Transverse colon (tissue), 4 donors: ENCODE measurements at regions of chr3 and their contacts with region 1.

Region 1: DNA sequence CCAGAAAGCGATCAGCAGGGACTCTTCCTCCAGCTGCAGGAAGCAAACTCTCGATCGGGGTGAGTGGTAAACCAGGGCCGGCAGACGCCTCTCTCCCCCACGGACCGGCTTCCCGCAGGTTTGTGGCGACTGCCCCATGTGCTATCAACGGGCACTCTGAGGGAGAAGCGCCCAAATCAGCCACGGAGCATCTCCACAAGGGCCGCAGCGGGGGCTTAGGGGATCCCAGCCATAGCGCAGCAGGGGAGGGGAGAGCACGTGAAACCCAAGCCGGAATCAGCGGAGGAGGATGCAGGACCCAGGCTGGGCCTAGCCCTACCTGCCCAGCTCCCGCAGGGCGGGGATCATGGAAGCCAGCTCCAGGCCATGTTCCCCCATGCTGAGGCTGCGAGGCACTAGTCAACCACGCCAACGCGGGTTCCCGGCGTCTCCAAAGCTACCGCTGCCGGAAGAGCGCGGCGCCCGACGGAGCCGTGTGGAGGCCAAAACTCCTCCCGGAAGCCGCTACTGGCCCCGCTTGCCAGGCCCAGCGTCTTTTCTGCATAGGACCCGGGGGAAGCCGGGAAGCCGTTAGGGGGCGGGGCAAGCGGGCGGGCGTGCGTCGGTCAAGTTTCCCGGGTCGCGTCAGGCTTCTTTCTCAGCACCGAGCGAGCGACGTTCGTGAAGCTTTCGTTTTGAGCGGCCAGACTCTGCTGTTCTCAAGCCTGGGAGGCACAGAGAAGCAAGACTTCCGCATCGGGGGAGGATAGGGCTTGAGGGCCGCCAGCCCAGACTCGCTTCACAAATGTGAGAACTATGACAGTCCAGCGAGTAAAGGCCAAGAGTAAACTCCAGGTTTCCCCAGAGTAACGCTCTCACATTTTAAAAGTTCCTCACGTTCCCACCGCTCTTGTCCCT is at the start of gene ATR:
- DNase-seq: peak; percentile 98
- H3K4me3 ChIP-seq: peak within 1 kb of the TSS; percentile 65 to 93 (median 89)
- H3K27ac ChIP-seq: peak within 1 kb of the TSS; percentile 85 to 98 (median 92)
- H3K4me1 ChIP-seq: peaks cover 14 to 43% (median 23%) of the 10 kb centered on the region in 4 donors
- H3K27me3 ChIP-seq: no peaks in the 10 kb centered on the region
- CTCF ChIP-seq: peak in 1 of 5 experiments; percentile 12
- EP300 ChIP-seq: peak; percentile 44
- POLR2A ChIP-seq: peak; percentile 88
- total RNA-seq, gene ATR: 22.4 to 37.8 (median 25.3) TPM

Region 2: DNA sequence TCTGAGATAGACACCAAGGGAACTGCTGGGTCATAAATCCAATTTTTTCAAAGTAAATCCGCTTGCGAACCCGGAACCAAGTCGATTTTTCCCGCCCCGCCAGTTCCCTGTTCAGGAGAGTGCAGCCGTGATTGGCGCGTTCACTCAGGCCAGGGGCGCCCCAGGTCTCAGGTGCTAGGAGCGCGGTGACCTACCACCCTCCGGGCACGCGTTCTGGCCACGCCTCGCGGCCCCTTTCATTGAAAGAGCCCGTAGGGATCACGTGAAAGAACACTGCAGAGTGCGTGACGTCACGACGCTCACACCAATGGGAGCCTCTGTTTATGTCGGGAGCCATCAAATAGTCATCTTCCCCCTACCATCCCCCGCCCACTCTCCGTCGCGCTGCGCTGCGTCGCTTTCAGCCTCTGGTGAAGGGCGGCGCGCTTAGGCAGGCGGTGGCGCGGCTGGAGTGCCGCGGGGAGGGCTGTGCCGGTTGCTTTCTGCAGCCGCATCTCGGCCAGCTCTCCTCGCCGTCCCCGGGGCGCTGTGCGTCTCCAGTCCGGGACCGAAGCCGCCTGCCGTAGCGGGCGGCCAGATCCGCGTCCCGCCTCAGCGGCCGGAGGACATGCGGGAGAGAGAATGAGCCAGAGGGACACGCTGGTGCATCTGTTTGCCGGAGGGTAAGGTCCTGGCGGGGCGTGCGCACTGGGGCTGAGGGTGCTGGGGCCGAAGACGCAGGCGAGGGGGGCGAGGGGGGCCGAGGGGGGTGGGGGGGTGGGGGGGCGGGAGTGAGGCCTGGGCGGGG is 1636.9 kb before region 1 on chr3 and contains the start of gene SLC25A36:
- in situ Hi-C with region 1: no loop called
- intact Hi-C with region 1: loop called (anchors 5 kb)
- DNase-seq: peak; percentile 98
- H3K4me3 ChIP-seq: peak within 1 kb of the TSS; percentile 73 to 93 (median 92)
- H3K27ac ChIP-seq: peak within 1 kb of the TSS; percentile 97 to 99 (median 99)
- H3K4me1 ChIP-seq: peaks cover 4 to 35% (median 24%) of the 10 kb centered on the region in 4 donors
- H3K27me3 ChIP-seq: no peaks in the 10 kb centered on the region
- CTCF ChIP-seq: peak in 1 of 5 experiments; percentile 21
- EP300 ChIP-seq: no peak
- POLR2A ChIP-seq: peak; percentile 98
- total RNA-seq, gene SLC25A36: 48.0 to 87.6 (median 54.8) TPM

Region 3: DNA sequence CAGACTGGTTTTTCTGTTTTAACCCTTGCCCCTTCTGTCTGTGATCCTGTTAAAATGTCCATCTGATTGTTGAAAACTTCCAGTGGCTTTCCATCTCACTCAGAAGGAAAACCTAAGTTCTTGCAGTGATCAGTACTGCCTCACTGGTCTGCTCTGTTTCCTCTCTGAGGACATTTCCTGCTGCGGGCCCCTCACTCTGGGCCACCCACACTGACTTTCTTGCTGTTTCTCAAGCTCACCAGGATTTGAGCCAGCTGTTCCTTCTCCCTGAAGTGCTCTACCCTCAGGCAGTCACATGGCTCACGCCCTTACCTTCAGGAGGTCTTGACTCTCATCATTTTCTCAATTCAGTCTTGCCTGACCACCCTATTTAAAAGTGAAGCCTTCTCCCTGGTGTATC is 813.6 kb before region 1 on chr3:
- in situ Hi-C with region 1: no loop called
- intact Hi-C with region 1: no loop called
- DNase-seq: no peak
- H3K4me3 ChIP-seq: no peak overlapping the region
- H3K27ac ChIP-seq: no peak overlapping the region
- H3K4me1 ChIP-seq: no peaks in the 10 kb centered on the region
- H3K27me3 ChIP-seq: no peaks in the 10 kb centered on the region
- CTCF ChIP-seq: no peak
- EP300 ChIP-seq: no peak
- POLR2A ChIP-seq: no peak

Region 4: DNA sequence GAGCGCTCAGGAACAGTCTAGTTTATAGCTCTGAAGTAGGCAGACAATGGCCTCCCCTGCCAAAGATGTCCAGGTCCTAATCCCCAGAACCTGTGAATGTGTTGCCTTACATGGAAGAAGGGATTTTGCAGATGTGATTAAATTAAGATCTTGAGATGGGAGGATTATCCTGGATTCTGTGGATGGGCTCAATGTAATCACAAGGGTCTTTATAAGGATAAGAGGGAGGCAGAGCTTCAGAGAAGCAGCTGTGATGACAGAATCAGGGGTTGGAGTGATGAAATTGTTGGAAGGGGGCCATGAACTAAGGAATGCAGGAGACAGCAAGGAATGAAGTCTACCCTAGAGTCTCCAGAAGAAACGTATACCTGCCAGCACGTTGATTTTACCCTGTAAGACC is 339.2 kb before region 1 on chr3:
- in situ Hi-C with region 1: no loop called
- intact Hi-C with region 1: no loop called
- DNase-seq: no peak
- H3K4me3 ChIP-seq: no peak overlapping the region
- H3K27ac ChIP-seq: no peak overlapping the region
- H3K4me1 ChIP-seq: peaks cover 0 to 14% (median 9%) of the 10 kb centered on the region in 4 donors
- H3K27me3 ChIP-seq: no peaks in the 10 kb centered on the region
- CTCF ChIP-seq: no peak
- EP300 ChIP-seq: no peak
- POLR2A ChIP-seq: no peak

Region 5: DNA sequence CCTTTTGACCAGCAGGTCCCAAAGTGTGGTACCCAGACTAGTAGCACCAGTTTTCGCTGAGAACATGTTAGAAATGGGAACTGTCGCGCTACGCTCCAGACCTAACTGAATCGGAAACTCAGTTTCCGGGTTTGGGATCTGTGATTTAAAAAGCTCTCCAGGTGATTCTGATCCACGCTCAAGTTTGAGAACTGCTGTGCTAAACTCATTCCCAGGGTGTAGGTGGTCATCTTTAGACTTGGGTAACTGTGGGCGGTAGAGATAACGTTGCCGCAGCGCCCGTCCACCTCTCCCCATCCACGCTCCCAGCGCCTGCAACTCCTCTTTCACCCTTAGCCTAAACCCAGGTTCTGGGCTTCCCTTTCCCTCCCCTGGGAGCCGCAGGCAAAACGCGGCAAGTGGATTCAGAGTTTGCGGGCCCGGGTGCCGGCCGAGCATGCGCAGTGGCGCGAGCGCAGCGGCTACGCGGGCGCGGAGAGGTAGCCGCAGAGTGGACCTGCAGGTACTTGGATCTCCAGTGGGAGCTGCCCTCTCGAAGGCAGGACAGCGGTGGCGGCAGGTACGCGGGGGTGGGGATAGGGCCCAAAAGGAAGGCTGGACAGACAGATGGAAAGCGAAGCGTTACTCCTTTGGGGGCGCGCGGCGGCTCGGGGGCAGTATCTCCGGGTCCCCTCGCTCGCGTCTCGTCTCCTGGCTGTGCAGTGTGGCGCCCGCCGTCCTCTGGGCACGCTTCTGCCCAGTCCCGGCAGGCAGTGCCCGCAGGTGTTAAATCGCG is 17.6 kb after region 1 on chr3 and contains the start of gene PLS1:
- in situ Hi-C with region 1: no loop called
- intact Hi-C with region 1: no loop called
- DNase-seq: peak; percentile 93
- H3K4me3 ChIP-seq: peak within 1 kb of the TSS; percentile 43 to 74 (median 62)
- H3K27ac ChIP-seq: peak within 1 kb of the TSS; percentile 80 to 88 (median 82)
- H3K4me1 ChIP-seq: peaks cover 0 to 31% (median 3%) of the 10 kb centered on the region in 4 donors
- H3K27me3 ChIP-seq: no peaks in the 10 kb centered on the region
- CTCF ChIP-seq: peak in 2 of 5 experiments; percentile 33 to 35
- EP300 ChIP-seq: no peak
- POLR2A ChIP-seq: peak; percentile 91
- total RNA-seq, gene PLS1: 58.7 to 507 (median 340) TPM

Region 6: GRCh38 chr3:143001369-143002082 is 423.0 kb after region 1 on chr3 and contains the start of gene U2SURP:
- in situ Hi-C with region 1: loop called in 2 of 4 experiments (anchors 10 to 25 kb)
- intact Hi-C with region 1: loop called (anchors 10 kb)
- DNase-seq: peak; percentile 97
- H3K4me3 ChIP-seq: peak within 1 kb of the TSS; percentile 70 to 97 (median 84)
- H3K27ac ChIP-seq: peak within 1 kb of the TSS; percentile 91 to 94 (median 92)
- H3K4me1 ChIP-seq: peaks cover 13 to 46% (median 24%) of the 10 kb centered on the region in 4 donors
- H3K27me3 ChIP-seq: no peaks in the 10 kb centered on the region
- CTCF ChIP-seq: peak in 3 of 5 experiments; percentile 11 to 48 (median 29)
- EP300 ChIP-seq: peak; percentile 12
- POLR2A ChIP-seq: peak; percentile 77
- total RNA-seq, gene U2SURP: 36.7 to 180 (median 79.3) TPM